Dendritic cell treated with granulocyte-macrophage colony-stimulating factor and Interleukin-4, amounts not matched to agents 40 ng/mL and 50 ng/mL, for 4 days (primary cell): ENCODE measurements at regions of chr7 and their contacts with region 1.

Region 1: DNA sequence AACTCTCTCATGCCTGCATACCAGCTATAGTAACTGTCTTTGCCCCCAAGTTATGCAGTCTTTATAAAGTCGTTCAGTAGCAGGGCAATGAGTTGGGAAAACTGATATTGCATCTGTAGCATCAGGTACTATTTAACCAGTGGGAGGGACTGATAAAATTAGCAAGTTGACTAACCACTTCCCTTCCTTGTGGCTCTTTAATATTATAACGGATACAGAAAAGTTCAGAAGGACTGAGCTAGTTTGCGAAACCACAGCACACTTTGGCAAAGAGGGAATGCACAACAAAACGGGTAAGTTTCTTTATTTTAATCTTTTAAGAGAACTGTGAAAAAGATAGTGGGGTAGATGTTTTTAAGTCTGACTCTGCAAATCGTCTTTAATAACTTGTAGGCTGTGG is 205.3 kb upstream of the HDAC9 start:
- H3K4me3 Mint-ChIP-seq: peak overlapping the region; percentile 74
- H3K27ac Mint-ChIP-seq: peak overlapping the region; percentile 83
- H3K4me1 Mint-ChIP-seq: peaks cover 64% of the 10 kb centered on the region
- H3K27me3 Mint-ChIP-seq: no peaks in the 10 kb centered on the region

Region 2: DNA sequence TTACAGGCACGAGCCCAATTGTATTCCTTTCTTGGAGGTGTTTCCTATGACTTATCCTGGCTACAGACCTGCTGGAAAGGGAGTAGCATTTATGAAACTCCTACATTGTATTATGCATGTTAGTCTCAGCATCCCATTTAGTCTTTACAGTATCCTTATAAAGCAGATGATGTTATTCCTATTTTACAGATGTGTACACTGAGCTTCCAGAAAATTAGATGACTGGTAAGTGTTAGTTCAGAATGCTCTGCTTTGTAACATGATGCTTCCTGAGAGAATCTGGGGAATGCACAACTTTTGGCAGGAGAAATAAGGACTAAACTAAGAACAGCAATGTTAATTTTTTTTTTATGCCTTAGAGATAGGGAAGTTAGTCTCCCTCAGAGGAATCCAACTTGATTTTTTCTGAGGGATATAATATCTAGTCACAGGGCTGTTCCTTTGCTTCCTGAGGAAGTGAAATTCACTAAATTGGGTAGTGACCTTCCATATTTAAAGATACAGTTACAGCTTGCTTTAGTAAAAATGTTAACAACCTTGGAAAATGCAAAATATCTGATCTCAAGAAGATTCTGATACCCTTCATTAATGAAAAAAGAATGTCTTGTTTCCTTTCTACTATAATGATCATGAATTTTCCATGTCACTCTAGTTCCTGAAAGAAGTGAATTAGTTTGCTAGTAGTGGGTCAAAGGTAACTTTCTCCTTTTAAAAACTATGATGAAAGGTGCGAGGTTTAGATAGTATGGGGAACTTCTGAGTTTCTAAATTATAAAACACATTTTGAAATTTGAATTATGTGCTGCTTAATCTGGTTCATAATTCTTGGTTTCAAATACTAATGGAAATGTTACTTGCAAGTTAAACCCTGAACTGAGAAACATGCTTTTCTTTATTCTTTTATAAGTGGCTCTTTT is 68.6 kb before region 1 on chr7:
- intact Hi-C with region 1: loop called (anchors 5 kb)
- H3K4me3 Mint-ChIP-seq: no peak overlapping the region
- H3K27ac Mint-ChIP-seq: peak overlapping the region; percentile 73
- H3K4me1 Mint-ChIP-seq: peaks cover 38% of the 10 kb centered on the region
- H3K27me3 Mint-ChIP-seq: no peaks in the 10 kb centered on the region

Region 3: GRCh38 chr7:18337048-18337809 is 47.0 kb after region 1 on chr7:
- intact Hi-C with region 1: loop called (anchors 2 kb)
- H3K4me3 Mint-ChIP-seq: peak overlapping the region; percentile 46
- H3K27ac Mint-ChIP-seq: peak overlapping the region; percentile 77
- H3K4me1 Mint-ChIP-seq: peaks cover 35% of the 10 kb centered on the region
- H3K27me3 Mint-ChIP-seq: no peaks in the 10 kb centered on the region